Activated CD4-positive, alpha-beta T cell treated with anti-CD3 and anti-CD28 coated beads for 36 hours (primary cell): ENCODE measurements at regions of chr19 and their contacts with region 1.

Region 1: GRCh38 chr19:39996811-39997594 is at the start of gene ZNF546:
- DNase-seq: peak; percentile 94
- ATAC-seq: peak; percentile 90
- H3K4me3 Mint-ChIP-seq: peak within 1 kb of the TSS; percentile 90
- H3K27ac Mint-ChIP-seq: peak within 1 kb of the TSS; percentile 99
- H3K4me1 Mint-ChIP-seq: peaks cover 48% of the 10 kb centered on the region
- H3K27me3 Mint-ChIP-seq: no peaks in the 10 kb centered on the region
- total RNA-seq, gene ZNF546: 6.3 to 6.9 TPM

Region 2: GRCh38 chr19:39824143-39825092 is 172.6 kb before region 1 on chr19:
- CTCF ChIA-PET with region 1: no interaction called
- POLR2A ChIA-PET with region 1: no interaction called
- intact Hi-C with region 1: loop called in 1 of 2 experiments (anchors 1 kb)
- DNase-seq: peak; percentile 94
- ATAC-seq: peak; percentile 100
- H3K4me3 Mint-ChIP-seq: no peak overlapping the region
- H3K27ac Mint-ChIP-seq: no peak overlapping the region
- H3K4me1 Mint-ChIP-seq: peaks cover 6% of the 10 kb centered on the region
- H3K27me3 Mint-ChIP-seq: no peaks in the 10 kb centered on the region

Region 3: GRCh38 chr19:40013991-40014390 is 17.0 kb after region 1 on chr19:
- CTCF ChIA-PET with region 1: no interaction called
- POLR2A ChIA-PET with region 1: no interaction called
- intact Hi-C with region 1: no loop called
- DNase-seq: no peak
- ATAC-seq: no peak
- H3K4me3 Mint-ChIP-seq: no peak overlapping the region
- H3K27ac Mint-ChIP-seq: no peak overlapping the region
- H3K4me1 Mint-ChIP-seq: no peaks in the 10 kb centered on the region
- H3K27me3 Mint-ChIP-seq: no peaks in the 10 kb centered on the region

Region 4: DNA sequence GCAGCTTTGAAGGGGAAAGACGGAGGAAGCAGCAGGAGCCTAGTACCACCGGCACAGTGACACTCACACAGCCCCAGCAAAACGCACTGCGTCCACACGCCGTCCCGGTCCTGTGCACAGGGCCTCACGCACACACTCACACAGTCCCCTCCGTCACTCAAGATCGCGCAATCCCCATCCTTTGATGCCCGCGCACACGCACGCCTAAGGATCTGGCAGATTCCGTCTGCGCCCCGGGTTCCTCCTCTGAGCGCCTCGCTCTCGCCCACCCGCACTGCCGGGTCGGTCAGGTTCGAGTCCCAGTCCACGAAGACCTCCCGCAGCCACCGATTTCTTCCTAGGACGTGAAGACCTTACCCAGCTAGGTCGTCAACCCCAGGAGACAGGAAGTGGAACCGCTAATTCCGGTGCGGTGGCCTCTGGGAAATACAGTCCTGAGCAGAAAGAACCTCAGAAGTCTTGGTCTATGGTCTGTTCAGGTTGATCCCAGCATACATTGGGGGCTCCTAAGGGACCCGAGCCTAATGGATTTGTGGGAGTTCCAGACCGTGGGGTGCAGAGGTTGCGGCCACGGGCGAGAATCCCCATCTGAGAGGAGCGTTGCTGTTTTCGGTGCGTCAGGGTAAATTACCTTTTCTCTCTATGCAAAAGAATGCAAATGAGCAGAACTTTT is 59.0 kb after region 1 on chr19 and contains the start of gene ZNF780B:
- CTCF ChIA-PET with region 1: no interaction called
- POLR2A ChIA-PET with region 1: no interaction called
- intact Hi-C with region 1: loop called (anchors 1 kb)
- DNase-seq: peak; percentile 84
- ATAC-seq: peak; percentile 93
- H3K4me3 Mint-ChIP-seq: peak within 1 kb of the TSS; percentile 93
- H3K27ac Mint-ChIP-seq: peak within 1 kb of the TSS; percentile 97
- H3K4me1 Mint-ChIP-seq: peaks cover 38% of the 10 kb centered on the region
- H3K27me3 Mint-ChIP-seq: peaks cover 8% of the 10 kb centered on the region
- total RNA-seq, gene ZNF780B: 17.4 to 18.8 TPM

Region 5: DNA sequence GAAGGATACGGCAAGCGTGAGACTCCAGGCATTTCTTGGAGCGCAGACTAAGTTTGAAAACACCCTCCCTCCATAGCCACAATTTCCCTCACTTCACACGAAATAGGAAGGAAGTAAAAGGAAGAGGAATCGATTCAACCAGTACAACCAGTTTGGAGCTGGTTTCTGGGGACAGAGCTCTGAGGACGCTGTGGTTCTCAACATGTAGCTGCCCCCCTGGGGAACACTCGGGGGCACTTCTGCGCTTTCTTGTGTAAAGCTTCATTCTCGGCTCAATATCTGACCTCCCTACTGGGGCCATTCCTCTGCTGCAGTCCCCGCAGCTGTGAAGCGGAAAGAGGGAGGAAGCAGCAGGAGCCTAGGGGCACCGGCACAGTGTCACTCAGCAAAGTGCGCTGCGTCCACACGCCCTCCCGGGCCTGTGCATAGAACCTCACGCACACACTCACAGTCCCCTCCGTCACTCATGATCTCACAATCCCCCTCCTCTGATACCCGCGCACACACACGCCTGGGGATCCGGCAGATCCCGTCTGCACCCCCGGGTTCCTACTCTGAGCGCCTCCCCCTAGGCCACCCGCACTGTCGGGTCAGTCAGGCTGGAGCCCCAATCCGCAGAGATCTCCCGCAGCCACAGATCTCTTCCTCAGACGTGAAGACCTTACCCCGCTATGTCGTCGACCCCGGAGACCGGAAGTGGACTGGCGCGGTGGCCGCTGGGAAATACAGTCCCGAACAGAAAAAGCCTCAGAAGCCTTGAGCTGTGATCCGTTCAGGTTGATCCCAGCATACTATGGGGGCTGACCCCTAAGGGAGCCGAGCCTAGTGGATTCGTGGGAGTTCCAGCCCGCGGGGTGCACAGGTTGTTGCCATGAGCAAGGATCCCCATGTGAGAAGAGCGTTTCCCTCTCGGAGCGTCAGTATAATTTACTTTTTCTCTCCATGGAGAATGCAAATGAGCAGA is 93.5 kb after region 1 on chr19 and contains the start of gene ZNF780A:
- CTCF ChIA-PET with region 1: no interaction called
- POLR2A ChIA-PET with region 1: no interaction called
- intact Hi-C with region 1: loop called (anchors 2 kb)
- DNase-seq: peak; percentile 88
- ATAC-seq: peak; percentile 94
- H3K4me3 Mint-ChIP-seq: peak within 1 kb of the TSS; percentile 97
- H3K27ac Mint-ChIP-seq: peak within 1 kb of the TSS; percentile 100
- H3K4me1 Mint-ChIP-seq: peaks cover 34% of the 10 kb centered on the region
- H3K27me3 Mint-ChIP-seq: peaks cover 5% of the 10 kb centered on the region
- total RNA-seq, gene ZNF780A: 19.2 to 19.4 TPM